Panc1 (cell line): ENCODE measurements at regions of chr11 and their contacts with region 1.

Region 1: GRCh38 chr11:44133335-44133946 is 38.0 kb downstream of the EXT2 start:
- DNase-seq: no peak
- ATAC-seq: peak; percentile 83
- H3K4me3 ChIP-seq: no peak overlapping the region
- H3K27ac ChIP-seq: no peak overlapping the region
- H3K4me1 ChIP-seq: 0 out of 2 replicates have a peak, but pooled peaks cover under 1% of the 10 kb centered on the region
- H3K27me3 ChIP-seq: no peaks in the 10 kb centered on the region
- CTCF ChIP-seq: peak; percentile 77

Region 2: GRCh38 chr11:44286268-44286880 is 152.9 kb after region 1 on chr11:
- CTCF ChIA-PET with region 1: no interaction called
- POLR2A ChIA-PET with region 1: no interaction called
- in situ Hi-C with region 1: no loop called
- intact Hi-C with region 1: loop called (anchors 10 kb)
- DNase-seq: peak; percentile 47
- ATAC-seq: peak; percentile 87
- H3K4me3 ChIP-seq: no peak overlapping the region
- H3K27ac ChIP-seq: no peak overlapping the region
- H3K4me1 ChIP-seq: peaks cover 4% of the 10 kb centered on the region
- H3K27me3 ChIP-seq: no peaks in the 10 kb centered on the region
- CTCF ChIP-seq: peak; percentile 94